HepG2 (cell line): ENCODE measurements at regions of chr14 and their contacts with region 1.

Region 1: GRCh38 chr14:24146978-24147760 is at the start of gene RNF31:
- DNase-seq: peak; percentile 100
- ATAC-seq: peak; percentile 90
- H3K4me3 ChIP-seq: peak within 1 kb of the TSS; percentile 91 to 100 (median 96)
- H3K27ac ChIP-seq: peak within 1 kb of the TSS; percentile 76
- H3K4me1 ChIP-seq: peaks cover 59% of the 10 kb centered on the region
- H3K27me3 ChIP-seq: peaks cover 0 to 3% of the 10 kb centered on the region in 2 experiments; a peak in 1 of 5 replicates
- CTCF ChIP-seq: no peak; the same call in 1 of the 2 replicates
- EP300 ChIP-seq: no peak
- POLR2A ChIP-seq: peak in 1 of 2 experiments; percentile 67; a peak in 2 of 4 replicates
- RAD21 ChIP-seq: peak; percentile 39
- total RNA-seq, gene RNF31: 65.9 and 86.8 TPM in 2 replicates

Region 2: DNA sequence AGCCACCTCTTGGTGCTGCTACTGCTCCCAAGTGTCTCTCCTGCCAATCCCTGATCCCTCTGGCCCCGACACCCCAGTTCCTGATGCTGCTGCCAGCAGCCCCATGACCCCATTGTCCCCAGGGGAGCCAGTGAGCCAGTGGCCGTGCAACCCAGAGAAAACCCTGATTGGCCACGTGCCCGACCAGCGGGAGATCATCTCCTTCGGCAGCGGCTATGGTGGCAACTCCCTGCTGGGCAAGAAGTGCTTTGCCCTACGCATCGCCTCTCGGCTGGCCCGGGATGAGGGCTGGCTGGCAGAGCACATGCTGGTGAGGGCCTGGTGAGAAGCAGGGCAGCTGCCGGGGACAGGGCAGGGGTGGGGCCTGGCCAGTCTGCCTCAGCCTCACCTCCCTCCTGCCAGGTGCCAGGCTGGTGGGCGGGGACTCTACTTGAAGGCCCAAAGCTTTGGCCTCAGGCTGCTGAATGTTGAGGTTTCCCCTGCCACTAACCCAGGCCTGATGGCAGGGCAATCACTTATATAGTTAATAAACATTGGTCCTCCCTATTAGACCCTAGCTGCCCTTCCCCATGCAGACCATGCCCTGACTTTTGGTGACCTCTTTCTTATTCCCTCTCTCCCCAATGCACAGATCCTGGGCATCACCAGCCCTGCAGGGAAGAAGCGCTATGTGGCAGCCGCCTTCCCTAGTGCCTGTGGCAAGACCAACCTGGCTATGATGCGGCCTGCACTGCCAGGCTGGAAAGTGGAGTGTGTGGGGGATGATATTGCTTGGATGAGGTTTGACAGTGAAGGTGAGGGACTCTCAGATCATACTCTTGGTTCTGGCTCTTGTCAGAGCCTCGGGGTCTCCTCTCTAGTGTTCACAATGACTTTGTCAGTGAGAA is 48.0 kb before region 1 on chr14:
- CTCF ChIA-PET with region 1: no interaction called
- POLR2A ChIA-PET with region 1: interaction called, 181 read pairs
- in situ Hi-C with region 1: no loop called
- intact Hi-C with region 1: no loop called
- DNase-seq: no peak
- ATAC-seq: no peak
- H3K4me3 ChIP-seq: no peak overlapping the region
- H3K27ac ChIP-seq: no peak overlapping the region
- H3K4me1 ChIP-seq: peaks cover 50% of the 10 kb centered on the region
- H3K27me3 ChIP-seq: peaks cover 0 to 6% of the 10 kb centered on the region in 2 experiments; a peak in 1 of 5 replicates
- CTCF ChIP-seq: no peak
- EP300 ChIP-seq: no peak
- POLR2A ChIP-seq: 0 out of 4 replicates have a peak, but pooled peaks of 1 of the 2 experiments have one; percentile 28
- RAD21 ChIP-seq: no peak

Region 3: GRCh38 chr14:24135834-24136542 is 11.2 kb before region 1 on chr14 and contains the start of gene PSME1:
- CTCF ChIA-PET with region 1: no interaction called
- POLR2A ChIA-PET with region 1: interaction called, 239 read pairs
- in situ Hi-C with region 1: no loop called
- intact Hi-C with region 1: no loop called
- DNase-seq: peak; percentile 93
- ATAC-seq: peak; percentile 86
- H3K4me3 ChIP-seq: peak within 1 kb of the TSS; percentile 91 to 98 (median 93)
- H3K27ac ChIP-seq: peak within 1 kb of the TSS; percentile 75
- H3K4me1 ChIP-seq: peaks cover 64% of the 10 kb centered on the region
- H3K27me3 ChIP-seq: no peaks in the 10 kb centered on the region; a peak in 1 of 5 replicates
- CTCF ChIP-seq: peak; percentile 47; the same call in 1 of the 2 replicates
- EP300 ChIP-seq: peak; percentile 23 to 43; a peak in 1 of 4 replicates
- POLR2A ChIP-seq: peak in 1 of 2 experiments; percentile 31; a peak in 1 of 4 replicates
- RAD21 ChIP-seq: peak; percentile 71
- total RNA-seq, gene PSME1: 608 and 713 TPM in 2 replicates

Region 4: DNA sequence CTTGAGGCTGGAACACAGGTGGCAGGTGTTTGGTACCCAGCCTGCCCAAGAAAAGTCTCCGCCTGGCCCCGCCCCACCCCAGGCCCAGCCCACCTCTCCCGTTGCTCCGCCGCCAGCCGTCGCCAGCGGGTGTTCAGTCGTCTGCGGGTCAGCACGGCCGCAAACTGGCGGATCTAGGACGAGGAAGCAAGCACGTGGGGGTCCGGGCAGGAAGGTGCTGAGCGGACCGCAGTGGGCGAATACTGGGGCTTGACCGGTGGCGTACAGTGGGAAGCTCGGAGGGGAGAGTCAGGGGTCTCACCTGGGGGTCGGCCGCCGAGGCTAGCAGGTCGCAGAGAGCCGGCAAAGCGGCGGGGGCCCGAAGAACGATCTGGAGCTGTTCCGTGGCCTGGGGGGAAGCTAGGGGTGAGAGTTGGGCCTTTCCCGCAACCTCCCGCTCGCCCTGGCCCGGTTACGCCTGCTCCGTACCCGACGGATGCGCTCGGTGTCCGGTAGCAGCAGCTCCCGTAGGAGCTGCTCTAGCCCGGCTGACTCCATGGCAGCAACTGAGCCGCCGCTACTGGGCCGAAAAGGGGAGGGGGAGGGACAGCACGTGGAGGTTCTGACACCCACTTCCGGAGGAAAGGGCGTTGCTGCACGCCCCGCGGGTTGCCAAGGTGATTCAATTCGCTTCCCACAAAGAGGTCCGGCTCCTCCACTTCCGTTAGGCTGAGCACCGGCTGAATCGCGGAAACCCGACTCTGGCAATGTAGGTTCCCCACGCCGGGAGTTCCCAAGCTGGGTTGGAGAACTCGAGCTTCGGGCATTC is 41.3 kb after region 1 on chr14 and contains the start of gene IPO4:
- CTCF ChIA-PET with region 1: no interaction called
- POLR2A ChIA-PET with region 1: interaction called, 41 read pairs
- in situ Hi-C with region 1: no loop called
- intact Hi-C with region 1: loop called (anchors 1 kb)
- DNase-seq: peak; percentile 100
- ATAC-seq: peak; percentile 88
- H3K4me3 ChIP-seq: peak within 1 kb of the TSS; percentile 70 to 92 (median 77)
- H3K27ac ChIP-seq: peak within 1 kb of the TSS; percentile 64
- H3K4me1 ChIP-seq: peaks cover 42% of the 10 kb centered on the region
- H3K27me3 ChIP-seq: no peaks in the 10 kb centered on the region
- CTCF ChIP-seq: peak; percentile 49
- EP300 ChIP-seq: peak; percentile 85 to 87; a peak in 3 of 4 replicates
- POLR2A ChIP-seq: peak in 1 of 2 experiments; percentile 98; a peak in 2 of 4 replicates
- RAD21 ChIP-seq: peak; percentile 77
- total RNA-seq, gene IPO4: 149 and 179 TPM in 2 replicates

Region 5: GRCh38 chr14:24299255-24300195 is 152.4 kb after region 1 on chr14 and contains the starts of genes DHRS1 and NOP9:
- CTCF ChIA-PET with region 1: interaction called, 3 read pairs
- POLR2A ChIA-PET with region 1: interaction called, 14 read pairs
- in situ Hi-C with region 1: no loop called
- intact Hi-C with region 1: no loop called
- DNase-seq: peak; percentile 93
- ATAC-seq: peak; percentile 80
- H3K4me3 ChIP-seq: peak within 1 kb of the TSS; percentile 79 to 98 (median 89)
- H3K27ac ChIP-seq: peak within 1 kb of the TSS; percentile 83
- H3K4me1 ChIP-seq: peaks cover 45% of the 10 kb centered on the region
- H3K27me3 ChIP-seq: no peaks in the 10 kb centered on the region; a peak in 1 of 5 replicates
- CTCF ChIP-seq: peak; percentile 53
- EP300 ChIP-seq: peak; percentile 63 to 81; a peak in 3 of 4 replicates
- POLR2A ChIP-seq: peak in 1 of 2 experiments; percentile 88; a peak in 2 of 4 replicates
- RAD21 ChIP-seq: peak; percentile 54; the same call in 1 of the 2 replicates
- total RNA-seq, gene DHRS1: 46.3 and 60.8 TPM in 2 replicates
- total RNA-seq, gene NOP9: 61.6 and 64.5 TPM in 2 replicates

Region 6: GRCh38 chr14:24389201-24389848 is 242.2 kb after region 1 on chr14:
- CTCF ChIA-PET with region 1: no interaction called
- POLR2A ChIA-PET with region 1: no interaction called
- in situ Hi-C with region 1: no loop called
- intact Hi-C with region 1: no loop called
- DNase-seq: no peak
- ATAC-seq: no peak
- H3K4me3 ChIP-seq: no peak overlapping the region
- H3K27ac ChIP-seq: no peak overlapping the region
- H3K4me1 ChIP-seq: peaks cover 44% of the 10 kb centered on the region
- H3K27me3 ChIP-seq: peaks cover 4 to 21% of the 10 kb centered on the region in 2 experiments; a peak in 4 of 5 replicates
- CTCF ChIP-seq: no peak
- EP300 ChIP-seq: no peak
- POLR2A ChIP-seq: no peak
- RAD21 ChIP-seq: no peak

Region 7: DNA sequence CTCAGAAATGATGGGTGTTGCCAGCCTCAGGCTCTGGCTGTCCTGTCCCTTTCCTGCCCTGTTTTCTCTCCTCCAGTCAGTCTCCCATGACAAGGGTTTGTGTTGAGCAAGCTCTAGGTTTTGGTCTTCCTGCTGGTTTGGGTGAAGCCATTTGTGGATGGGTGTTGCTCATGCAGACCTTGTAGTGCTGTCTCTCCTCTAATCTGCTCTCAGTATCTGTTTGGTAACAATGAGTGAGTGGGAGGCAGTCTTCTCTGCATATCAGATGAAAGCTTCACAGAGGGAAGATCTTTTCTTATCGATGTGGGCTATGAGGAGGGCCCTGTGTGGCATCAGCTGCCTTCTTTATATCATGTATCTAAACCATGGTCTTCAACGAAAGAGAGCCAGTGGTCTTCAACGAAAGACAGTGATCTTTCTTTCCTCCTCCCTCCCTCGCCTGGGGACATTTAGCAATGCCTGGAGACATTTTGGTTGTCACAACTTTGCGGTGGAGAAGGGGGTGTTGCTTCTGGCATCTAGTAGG is 357.3 kb after region 1 on chr14:
- CTCF ChIA-PET with region 1: no interaction called
- POLR2A ChIA-PET with region 1: no interaction called
- in situ Hi-C with region 1: no loop called
- intact Hi-C with region 1: no loop called
- DNase-seq: no peak
- ATAC-seq: no peak
- H3K4me3 ChIP-seq: no peak overlapping the region
- H3K27ac ChIP-seq: no peak overlapping the region
- H3K4me1 ChIP-seq: no peaks in the 10 kb centered on the region
- H3K27me3 ChIP-seq: 0 out of 5 replicates have a peak, but pooled peaks cover 0 to 6% of the 10 kb centered on the region in 2 experiments
- CTCF ChIP-seq: no peak
- EP300 ChIP-seq: no peak
- POLR2A ChIP-seq: no peak
- RAD21 ChIP-seq: no peak